ENCODE measurements at regions of chr11 and their contacts with region 1.

Region 1: DNA sequence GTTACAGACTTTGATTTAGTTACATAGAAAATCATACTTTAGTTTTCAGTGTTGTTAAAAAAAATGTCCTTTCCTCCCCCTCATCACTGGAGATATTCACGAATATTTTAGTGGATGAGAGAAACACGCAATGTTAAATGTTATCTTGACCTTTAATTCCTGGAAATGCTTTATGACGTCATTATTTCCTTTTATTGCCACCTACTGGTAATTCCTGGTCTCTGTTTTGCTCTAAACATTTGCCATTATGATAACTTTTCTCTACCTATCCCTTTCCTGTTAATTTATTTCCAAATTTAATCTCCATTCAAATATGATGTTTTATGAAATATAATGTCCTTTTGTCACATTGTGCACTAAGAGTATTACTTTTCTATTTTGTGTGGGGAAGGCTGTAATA is 770.6 kb downstream of the FAM181B start:
- DNase-seq: peak; percentile 30
- H3K4me3 ChIP-seq: no peak overlapping the region
- H3K27ac ChIP-seq: no peak overlapping the region
- H3K4me1 ChIP-seq: no peaks in the 10 kb centered on the region
- CTCF ChIP-seq: peak; percentile 77

Region 2: GRCh38 chr11:81658722-81659121 is 304.3 kb before region 1 on chr11:
- CTCF ChIA-PET with region 1: no interaction called
- POLR2A ChIA-PET with region 1: no interaction called
- intact Hi-C with region 1: loop called (anchors 5 kb)
- DNase-seq: peak; percentile 44
- H3K4me3 ChIP-seq: no peak overlapping the region
- H3K27ac ChIP-seq: no peak overlapping the region
- H3K4me1 ChIP-seq: no peaks in the 10 kb centered on the region
- CTCF ChIP-seq: peak; percentile 78

Region 3: DNA sequence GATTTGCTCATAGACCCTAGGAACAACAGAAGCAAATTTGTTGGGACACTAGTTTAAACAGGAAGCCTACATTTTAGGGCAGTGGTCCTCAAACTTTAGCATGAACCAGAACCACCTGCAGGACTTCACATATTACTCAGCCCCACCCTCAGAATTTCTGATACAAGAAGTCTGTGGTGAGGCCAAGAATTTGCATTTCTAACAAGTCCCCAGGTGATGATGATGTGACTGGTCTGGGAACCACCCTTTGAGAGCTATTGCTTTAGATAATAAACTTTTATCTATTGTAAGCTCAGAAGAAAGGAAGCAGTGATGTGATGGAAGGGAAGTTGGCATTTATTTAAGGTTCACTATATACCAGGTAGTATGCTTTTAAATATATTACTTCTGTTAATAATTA is 576.7 kb after region 1 on chr11:
- CTCF ChIA-PET with region 1: no interaction called
- POLR2A ChIA-PET with region 1: no interaction called
- intact Hi-C with region 1: no loop called
- DNase-seq: no peak
- H3K4me3 ChIP-seq: no peak overlapping the region
- H3K27ac ChIP-seq: no peak overlapping the region
- H3K4me1 ChIP-seq: no peaks in the 10 kb centered on the region
- CTCF ChIP-seq: no peak